ENCODE measurements at regions of chr22 and their contacts with region 1.

Region 1: DNA sequence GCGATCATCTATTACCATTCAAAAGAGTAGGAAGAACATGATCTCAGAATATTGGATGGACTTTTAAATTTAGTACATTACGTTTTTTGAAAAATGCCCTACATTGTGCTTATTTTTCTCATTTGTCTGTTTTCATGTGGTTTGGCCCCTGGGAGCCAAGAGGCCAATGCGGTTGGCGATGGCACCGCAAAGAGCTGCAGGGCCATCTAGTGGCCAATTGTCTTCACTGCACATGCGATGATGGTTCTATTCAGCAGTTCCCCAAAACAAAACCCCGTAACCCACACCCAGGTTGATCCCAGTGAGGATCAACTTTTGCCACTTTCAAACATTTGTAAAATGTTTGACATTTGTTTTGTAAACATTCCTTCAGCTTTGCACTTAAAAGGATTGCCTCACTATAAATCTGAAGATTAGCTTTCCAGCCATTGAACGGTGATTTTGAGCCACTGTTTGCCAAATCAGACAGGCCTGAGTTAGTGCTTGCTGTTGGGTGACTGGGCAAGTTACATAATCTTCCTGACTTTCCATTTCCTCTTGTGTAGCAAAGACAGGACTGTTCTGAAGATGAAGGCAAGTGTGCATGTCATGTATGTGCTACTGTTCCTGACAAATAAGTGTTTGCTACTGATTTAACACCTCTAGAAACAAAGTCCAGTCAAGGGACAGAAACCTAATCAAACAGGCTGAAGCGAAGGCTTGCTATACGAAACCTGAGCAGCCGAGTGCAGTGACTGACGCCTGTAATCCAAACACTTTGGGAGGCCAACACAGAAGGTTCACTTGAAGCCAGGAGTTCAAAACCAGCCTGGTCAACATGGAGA is 29.2 kb upstream of the XBP1 start:
- DNase-seq: peak; percentile 59 to 81 (median 67)
- H3K4me3 ChIP-seq: no peak overlapping the region
- H3K4me3 Mint-ChIP-seq: peak overlapping the region in 3 of 7 donors; percentile 37 to 70 (median 49)
- H3K27ac ChIP-seq: no peak overlapping the region
- H3K27ac Mint-ChIP-seq: peak overlapping the region in 3 of 8 donors; percentile 3 to 52 (median 40)
- H3K4me1 ChIP-seq: peaks cover 13% of the 10 kb centered on the region
- H3K4me1 Mint-ChIP-seq: peaks cover 18 to 45% (median 23%) of the 10 kb centered on the region in 3 donors
- H3K27me3 ChIP-seq: no peaks in the 10 kb centered on the region
- H3K27me3 Mint-ChIP-seq: peaks cover 0 to 1% of the 10 kb centered on the region in 2 donors

Region 2: GRCh38 chr22:28600546-28601143 is 228.9 kb before region 1 on chr22:
- CTCF ChIA-PET with region 1: interaction called, 50 read pairs
- POLR2A ChIA-PET with region 1: interaction called, 3 read pairs
- DNase-seq: peak in 2 of 5 donors; percentile 46 to 56
- H3K4me3 ChIP-seq: no peak overlapping the region
- H3K4me3 Mint-ChIP-seq: no peak overlapping the region
- H3K27ac ChIP-seq: no peak overlapping the region
- H3K27ac Mint-ChIP-seq: no peak overlapping the region
- H3K4me1 ChIP-seq: no peaks in the 10 kb centered on the region
- H3K4me1 Mint-ChIP-seq: no peaks in the 10 kb centered on the region
- H3K27me3 ChIP-seq: peaks cover 16% of the 10 kb centered on the region
- H3K27me3 Mint-ChIP-seq: peaks cover 10 to 40% of the 10 kb centered on the region in 2 donors

Region 3: DNA sequence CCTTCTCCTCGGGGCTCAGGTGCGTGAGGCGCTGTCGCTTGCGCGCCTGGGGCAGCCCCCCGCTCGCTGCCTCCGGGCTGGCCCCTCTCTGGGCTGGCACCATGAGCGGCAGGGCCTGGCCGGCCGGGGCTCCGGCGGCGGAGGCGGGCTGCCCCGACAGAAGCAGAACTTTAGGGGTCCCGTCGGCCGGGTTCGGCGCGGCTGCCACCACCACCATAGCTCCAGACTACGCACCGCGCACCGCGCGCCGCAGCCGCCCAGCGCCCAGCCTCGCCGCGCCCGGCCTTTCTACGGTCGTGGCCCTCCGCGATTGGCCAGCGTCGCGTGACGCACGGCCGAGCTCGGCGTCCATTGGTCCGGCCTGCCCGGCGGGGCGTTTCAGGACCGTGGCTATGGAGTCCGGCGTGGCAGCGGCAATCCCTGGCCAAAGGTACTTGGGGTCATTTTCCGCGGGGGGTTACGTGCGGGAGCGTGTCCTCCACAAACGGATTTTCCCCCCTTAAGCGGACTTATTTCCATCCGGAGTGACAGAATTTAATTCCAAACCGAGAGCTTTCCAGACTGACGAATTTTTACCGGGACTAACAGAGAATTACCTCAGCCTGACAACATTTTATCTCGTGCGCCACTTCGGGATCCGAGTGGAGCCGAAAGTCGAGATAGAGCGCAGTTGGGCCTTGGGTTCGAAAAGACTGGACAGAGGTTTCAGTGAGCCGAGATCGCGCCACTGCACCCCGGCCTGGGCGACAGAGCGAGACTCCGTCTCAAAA is 29.1 kb before region 1 on chr22 and contains the start of gene XBP1:
- CTCF ChIA-PET with region 1: interaction called, 40 read pairs
- POLR2A ChIA-PET with region 1: interaction called, 8 read pairs
- DNase-seq: peak; percentile 85 to 92 (median 90)
- H3K4me3 ChIP-seq: peak within 1 kb of the TSS; percentile 99
- H3K4me3 Mint-ChIP-seq: peak within 1 kb of the TSS; percentile 84 to 97 (median 95)
- H3K27ac ChIP-seq: peak within 1 kb of the TSS; percentile 100
- H3K27ac Mint-ChIP-seq: peak within 1 kb of the TSS; percentile 96 to 100 (median 100)
- H3K4me1 ChIP-seq: peaks cover 42% of the 10 kb centered on the region
- H3K4me1 Mint-ChIP-seq: peaks cover 58 to 62% (median 62%) of the 10 kb centered on the region in 3 donors
- H3K27me3 ChIP-seq: no peaks in the 10 kb centered on the region
- H3K27me3 Mint-ChIP-seq: peaks cover 0 to 4% of the 10 kb centered on the region in 2 donors
- total RNA-seq, gene XBP1: 67.3 to 71.4 TPM

Region 4: DNA sequence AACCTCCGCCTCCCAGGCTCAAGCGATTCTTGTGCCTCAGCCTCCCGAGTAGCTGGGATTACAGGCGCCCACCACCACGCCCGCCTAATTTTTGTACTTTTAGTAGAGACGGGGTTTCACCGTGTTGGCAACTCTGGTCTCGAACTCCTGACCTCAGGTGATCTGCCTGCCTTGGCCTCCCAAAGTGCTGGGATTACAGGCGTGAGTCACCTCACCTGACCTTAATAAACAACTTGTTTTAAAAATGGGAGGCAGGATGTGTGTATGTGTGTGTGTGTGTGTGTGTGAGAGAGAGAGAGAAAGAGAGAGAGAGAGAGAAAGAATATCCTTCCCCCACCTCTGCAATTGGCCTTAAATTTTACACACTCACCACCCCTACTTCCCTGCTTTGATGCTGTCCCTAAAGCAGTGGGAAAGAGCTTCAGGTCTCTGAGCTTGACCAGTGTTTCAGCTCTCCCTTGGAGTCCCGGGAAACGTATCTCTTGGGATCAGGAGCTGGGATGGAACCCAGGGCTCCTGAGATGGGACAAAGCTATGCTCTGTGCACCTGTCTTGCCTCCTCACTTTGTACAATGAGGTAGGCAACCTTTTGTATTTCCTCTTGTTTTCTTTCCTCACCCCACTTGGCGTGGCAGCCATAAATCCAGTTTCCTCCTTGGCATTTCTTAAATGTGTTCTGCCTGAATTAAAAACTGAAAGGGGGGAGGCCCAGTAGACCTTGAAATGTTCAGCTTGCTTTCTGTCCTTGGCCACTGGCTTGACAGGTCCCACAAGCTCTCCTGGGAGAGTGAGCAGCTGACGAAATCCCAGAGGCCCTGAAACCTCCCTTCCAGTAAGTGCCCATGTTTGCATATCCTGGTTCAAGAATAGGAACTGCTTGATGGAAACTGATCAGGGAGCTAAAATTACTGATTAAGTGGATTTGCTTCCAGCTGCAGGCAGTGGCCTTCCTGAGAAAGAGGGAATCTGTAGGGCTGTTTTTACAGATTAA is 11.4 kb before region 1 on chr22:
- CTCF ChIA-PET with region 1: interaction called, 16 read pairs
- POLR2A ChIA-PET with region 1: no interaction called
- DNase-seq: no peak
- H3K4me3 ChIP-seq: no peak overlapping the region
- H3K4me3 Mint-ChIP-seq: peak overlapping the region in 3 of 7 donors; percentile 27 to 49 (median 34)
- H3K27ac ChIP-seq: no peak overlapping the region
- H3K27ac Mint-ChIP-seq: peak overlapping the region in 5 of 8 donors; percentile 33 to 94 (median 64)
- H3K4me1 ChIP-seq: peaks cover 79% of the 10 kb centered on the region
- H3K4me1 Mint-ChIP-seq: peaks cover 59 to 80% (median 69%) of the 10 kb centered on the region in 3 donors
- H3K27me3 ChIP-seq: no peaks in the 10 kb centered on the region
- H3K27me3 Mint-ChIP-seq: peaks cover 0 to 1% of the 10 kb centered on the region in 2 donors

Measured in CD8-positive, alpha-beta memory T cell (primary cell).